Activated CD4-positive, alpha-beta T cell treated with anti-CD3 and anti-CD28 coated beads for 36 hours (primary cell): ENCODE measurements at regions of chr16 and their contacts with region 1.

Region 1: GRCh38 chr16:86519649-86520316 is 9.5 kb downstream of the FOXF1 start:
- DNase-seq: peak; percentile 74
- ATAC-seq: peak; percentile 39
- H3K4me3 Mint-ChIP-seq: no peak overlapping the region
- H3K27ac Mint-ChIP-seq: no peak overlapping the region
- H3K4me1 Mint-ChIP-seq: peaks cover 3% of the 10 kb centered on the region
- H3K27me3 Mint-ChIP-seq: peaks cover 35% of the 10 kb centered on the region

Region 2: GRCh38 chr16:86044241-86044671 is 475.5 kb before region 1 on chr16:
- CTCF ChIA-PET with region 1: interaction called, 6 read pairs
- POLR2A ChIA-PET with region 1: no interaction called
- intact Hi-C with region 1: loop called in 1 of 2 experiments (anchors 1 kb)
- DNase-seq: peak; percentile 76
- ATAC-seq: no peak
- H3K4me3 Mint-ChIP-seq: no peak overlapping the region
- H3K27ac Mint-ChIP-seq: no peak overlapping the region
- H3K4me1 Mint-ChIP-seq: peaks cover 18% of the 10 kb centered on the region
- H3K27me3 Mint-ChIP-seq: peaks cover 30% of the 10 kb centered on the region

Region 3: GRCh38 chr16:86072328-86073102 is 447.3 kb before region 1 on chr16:
- CTCF ChIA-PET with region 1: interaction called, 5 read pairs
- POLR2A ChIA-PET with region 1: no interaction called
- intact Hi-C with region 1: loop called (anchors 1 to 2 kb)
- DNase-seq: peak; percentile 69
- ATAC-seq: no peak
- H3K4me3 Mint-ChIP-seq: no peak overlapping the region
- H3K27ac Mint-ChIP-seq: no peak overlapping the region
- H3K4me1 Mint-ChIP-seq: no peaks in the 10 kb centered on the region
- H3K27me3 Mint-ChIP-seq: peaks cover 6% of the 10 kb centered on the region

Region 4: GRCh38 chr16:86343027-86343787 is 176.6 kb before region 1 on chr16:
- CTCF ChIA-PET with region 1: interaction called, 9 read pairs
- POLR2A ChIA-PET with region 1: no interaction called
- intact Hi-C with region 1: loop called (anchors 1 kb)
- DNase-seq: no peak
- ATAC-seq: no peak
- H3K4me3 Mint-ChIP-seq: no peak overlapping the region
- H3K27ac Mint-ChIP-seq: no peak overlapping the region
- H3K4me1 Mint-ChIP-seq: no peaks in the 10 kb centered on the region
- H3K27me3 Mint-ChIP-seq: peaks cover 44% of the 10 kb centered on the region

Region 5: GRCh38 chr16:86424398-86425367 is 95.1 kb before region 1 on chr16:
- CTCF ChIA-PET with region 1: no interaction called
- POLR2A ChIA-PET with region 1: no interaction called
- intact Hi-C with region 1: no loop called
- DNase-seq: no peak
- ATAC-seq: no peak
- H3K4me3 Mint-ChIP-seq: no peak overlapping the region
- H3K27ac Mint-ChIP-seq: no peak overlapping the region
- H3K4me1 Mint-ChIP-seq: no peaks in the 10 kb centered on the region
- H3K27me3 Mint-ChIP-seq: no peaks in the 10 kb centered on the region

Region 6: DNA sequence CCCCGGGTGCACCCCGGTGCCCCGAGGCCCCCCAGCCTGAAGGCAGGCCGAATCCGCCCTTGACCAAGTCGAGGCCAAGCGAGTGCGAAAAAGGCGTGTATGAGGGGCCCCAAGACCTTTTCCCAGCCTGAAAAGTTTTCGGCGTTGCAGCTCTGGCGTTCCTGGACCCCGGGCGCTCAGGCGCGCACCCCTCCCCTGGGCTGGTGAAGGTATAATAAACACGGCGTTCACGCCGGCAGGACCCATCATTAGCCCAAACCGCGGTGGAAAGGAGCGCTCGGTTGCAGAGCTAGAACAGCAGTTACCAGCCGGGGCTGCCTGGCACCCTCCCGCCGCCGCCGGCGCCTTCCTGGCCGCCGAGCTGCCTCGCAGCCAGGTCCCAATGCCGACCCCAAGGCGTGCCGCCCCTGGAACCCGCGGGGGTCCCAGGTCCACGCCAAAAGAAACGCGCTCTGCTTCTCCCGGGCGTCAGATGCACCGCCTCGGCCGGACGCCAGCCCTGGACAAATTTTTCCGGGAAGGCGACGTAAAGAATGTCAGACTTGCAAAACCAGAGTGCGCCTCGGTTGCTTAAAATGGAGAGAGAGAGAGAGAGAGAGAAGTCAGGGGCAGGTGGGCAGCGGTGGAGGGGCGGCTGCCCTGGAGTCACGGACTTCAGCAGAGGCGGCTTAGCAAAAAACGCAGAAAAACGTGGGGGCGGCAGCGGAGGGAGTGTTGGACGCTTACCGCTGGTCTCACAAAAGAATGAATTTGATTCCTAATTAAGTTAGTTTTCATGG is 20.9 kb before region 1 on chr16:
- CTCF ChIA-PET with region 1: interaction called, 3 read pairs
- POLR2A ChIA-PET with region 1: no interaction called
- intact Hi-C with region 1: loop called in 1 of 2 experiments (anchors 2 kb)
- DNase-seq: no peak
- ATAC-seq: no peak
- H3K4me3 Mint-ChIP-seq: no peak overlapping the region
- H3K27ac Mint-ChIP-seq: no peak overlapping the region
- H3K4me1 Mint-ChIP-seq: peaks cover 5% of the 10 kb centered on the region
- H3K27me3 Mint-ChIP-seq: peaks cover 72% of the 10 kb centered on the region